Esophagus muscularis mucosa (tissue), 4 donors: ENCODE measurements at regions of chr11 and their contacts with region 1.

Region 1: GRCh38 chr11:10379022-10379421 is 74.1 kb downstream of the ADM start:
- DNase-seq: peak; percentile 68
- H3K4me3 ChIP-seq: no peak overlapping the region
- H3K27ac ChIP-seq: peak overlapping the region; percentile 25 to 65 (median 30)
- H3K4me1 ChIP-seq: peaks cover 12 to 67% (median 48%) of the 10 kb centered on the region in 4 donors
- H3K27me3 ChIP-seq: no peaks in the 10 kb centered on the region
- CTCF ChIP-seq: no peak
- EP300 ChIP-seq: no peak
- POLR2A ChIP-seq: no peak

Region 2: DNA sequence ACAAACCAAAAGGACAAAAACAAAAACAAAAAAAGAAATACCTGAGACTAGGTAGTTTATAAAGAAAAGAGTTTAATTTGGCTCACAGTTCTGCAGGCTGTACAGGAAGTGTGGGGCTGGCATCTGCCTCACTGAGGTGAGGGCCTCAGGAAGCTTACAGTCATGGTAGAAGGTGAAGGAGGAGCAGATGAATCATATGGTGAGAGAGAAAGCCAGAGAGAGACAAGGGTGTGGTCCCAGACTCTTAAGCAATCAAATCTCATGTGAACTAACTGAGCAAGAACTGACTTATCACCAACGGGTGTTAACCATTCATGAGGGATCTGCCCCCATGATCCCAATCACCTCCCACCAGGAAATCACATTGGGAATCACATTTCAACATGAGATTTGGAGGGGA is 537.7 kb after region 1 on chr11:
- intact Hi-C with region 1: loop called (anchors 10 kb)
- DNase-seq: no peak
- H3K4me3 ChIP-seq: no peak overlapping the region
- H3K27ac ChIP-seq: no peak overlapping the region
- H3K4me1 ChIP-seq: peaks cover under 1 to 15% (median 9%) of the 10 kb centered on the region in 4 donors
- H3K27me3 ChIP-seq: no peaks in the 10 kb centered on the region
- CTCF ChIP-seq: no peak
- EP300 ChIP-seq: no peak
- POLR2A ChIP-seq: no peak